ENCODE measurements at regions of chr1 and their contacts with region 1.

Region 1: GRCh38 chr1:151281969-151282882 is at the start of gene ZNF687:
- DNase-seq: peak; percentile 100
- H3K4me3 ChIP-seq: peak within 1 kb of the TSS; percentile 95
- H3K27ac ChIP-seq: peak within 1 kb of the TSS; percentile 99
- H3K4me1 ChIP-seq: peaks cover 3% of the 10 kb centered on the region
- H3K27me3 ChIP-seq: no peaks in the 10 kb centered on the region
- CTCF ChIP-seq: no peak
- total RNA-seq, gene ZNF687: 26.4 and 30.2 TPM in 2 replicates

Region 2: GRCh38 chr1:151327223-151327902 is 45.1 kb after region 1 on chr1 and contains the start of gene PI4KB:
- CTCF ChIA-PET with region 1: no interaction called
- POLR2A ChIA-PET with region 1: interaction called, 14 read pairs
- intact Hi-C with region 1: no loop called
- DNase-seq: peak; percentile 99
- H3K4me3 ChIP-seq: peak within 1 kb of the TSS; percentile 66
- H3K27ac ChIP-seq: peak within 1 kb of the TSS; percentile 97
- H3K4me1 ChIP-seq: peaks cover 8% of the 10 kb centered on the region
- H3K27me3 ChIP-seq: no peaks in the 10 kb centered on the region
- CTCF ChIP-seq: no peak
- total RNA-seq, gene PI4KB: 62.1 and 62.8 TPM in 2 replicates

Region 3: DNA sequence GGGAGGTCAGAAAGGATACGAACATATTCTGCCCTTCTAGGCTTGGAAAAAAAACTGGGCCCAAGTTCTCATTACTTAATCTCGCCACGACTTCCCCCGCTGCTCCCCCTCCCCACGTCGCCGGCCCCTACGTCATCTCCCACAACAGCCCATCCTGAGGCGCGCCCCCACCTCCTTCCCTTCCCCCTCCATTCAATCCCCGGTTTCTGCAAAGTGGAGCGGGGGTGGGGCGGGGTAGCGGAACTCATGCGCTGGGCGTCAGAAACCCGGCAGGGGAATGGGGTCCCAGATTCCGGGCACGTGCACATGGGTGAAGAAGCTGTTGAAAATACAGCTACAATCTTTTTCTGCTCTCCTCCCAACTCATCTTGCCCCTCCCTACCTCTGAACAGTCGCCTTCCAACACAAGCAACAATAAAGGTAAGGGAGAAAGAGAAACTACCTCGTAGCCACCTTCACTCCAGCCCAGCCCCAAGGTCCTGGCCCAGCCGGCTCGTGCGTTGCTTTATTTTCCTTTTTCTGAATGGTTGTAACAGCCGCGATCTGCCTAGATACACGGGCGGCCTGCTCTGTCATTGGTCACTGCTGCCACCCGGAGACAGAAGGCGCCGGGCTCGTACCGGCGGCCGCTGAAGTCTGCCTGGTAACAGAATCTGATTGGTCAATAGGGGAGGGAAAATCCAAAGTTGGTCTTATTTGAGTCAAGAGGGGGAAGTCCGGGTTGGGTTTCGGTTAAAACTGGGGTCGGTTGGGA is 64.7 kb after region 1 on chr1 and contains the start of gene RFX5:
- CTCF ChIA-PET with region 1: no interaction called
- POLR2A ChIA-PET with region 1: interaction called, 4 read pairs
- intact Hi-C with region 1: loop called (anchors 5 kb)
- DNase-seq: peak; percentile 99
- H3K4me3 ChIP-seq: peak within 1 kb of the TSS; percentile 49
- H3K27ac ChIP-seq: peak within 1 kb of the TSS; percentile 80
- H3K4me1 ChIP-seq: peaks cover 9% of the 10 kb centered on the region
- H3K27me3 ChIP-seq: no peaks in the 10 kb centered on the region
- CTCF ChIP-seq: no peak
- total RNA-seq, gene RFX5: 49.0 and 51.8 TPM in 2 replicates

Measured in A673 (cell line).